Astrocyte of the cerebellum (primary cell): ENCODE measurements at regions of chr6 and their contacts with region 1.

Region 1: GRCh38 chr6:122839477-122839876 is 50.4 kb downstream of the SMPDL3A start:
- DNase-seq: peak; percentile 52
- H3K4me3 ChIP-seq: no peak overlapping the region
- CTCF ChIP-seq: peak; percentile 71

Region 2: GRCh38 chr6:122491919-122492555 is 347.4 kb before region 1 on chr6:
- in situ Hi-C with region 1: loop called (anchors 10 kb)
- DNase-seq: peak; percentile 59
- H3K4me3 ChIP-seq: no peak overlapping the region
- CTCF ChIP-seq: peak; percentile 99